CD8-positive, alpha-beta memory T cell (primary cell): ENCODE measurements at regions of chr16 and their contacts with region 1.

Region 1: GRCh38 chr16:67641779-67642708 is 2.9 kb upstream of the CARMIL2 start:
- DNase-seq: no peak
- H3K4me3 ChIP-seq: no peak overlapping the region
- H3K4me3 Mint-ChIP-seq: peak overlapping the region in 1 of 7 donors; percentile 36
- H3K27ac ChIP-seq: no peak overlapping the region
- H3K27ac Mint-ChIP-seq: peak overlapping the region in 2 of 8 donors; percentile 10 to 42
- H3K4me1 ChIP-seq: peaks cover 22% of the 10 kb centered on the region
- H3K4me1 Mint-ChIP-seq: peaks cover 4 to 24% (median 11%) of the 10 kb centered on the region in 3 donors
- H3K27me3 ChIP-seq: no peaks in the 10 kb centered on the region
- H3K27me3 Mint-ChIP-seq: no peaks in the 10 kb centered on the region

Region 2: GRCh38 chr16:67480833-67481560 is 161.0 kb before region 1 on chr16 and contains the start of gene ATP6V0D1:
- CTCF ChIA-PET with region 1: interaction called, 24 read pairs
- POLR2A ChIA-PET with region 1: interaction called, 3 read pairs
- DNase-seq: peak; percentile 98 to 99 (median 99)
- H3K4me3 ChIP-seq: peak within 1 kb of the TSS; percentile 96
- H3K4me3 Mint-ChIP-seq: peak within 1 kb of the TSS; percentile 96 to 100 (median 100)
- H3K27ac ChIP-seq: peak within 1 kb of the TSS; percentile 98
- H3K27ac Mint-ChIP-seq: peak within 1 kb of the TSS; percentile 96 to 100 (median 99)
- H3K4me1 ChIP-seq: peaks cover 28% of the 10 kb centered on the region
- H3K4me1 Mint-ChIP-seq: peaks cover 45 to 72% (median 47%) of the 10 kb centered on the region in 3 donors
- H3K27me3 ChIP-seq: no peaks in the 10 kb centered on the region
- H3K27me3 Mint-ChIP-seq: peaks cover 0 to 2% of the 10 kb centered on the region in 2 donors
- total RNA-seq, gene ATP6V0D1: 49.3 to 57.6 TPM

Region 3: DNA sequence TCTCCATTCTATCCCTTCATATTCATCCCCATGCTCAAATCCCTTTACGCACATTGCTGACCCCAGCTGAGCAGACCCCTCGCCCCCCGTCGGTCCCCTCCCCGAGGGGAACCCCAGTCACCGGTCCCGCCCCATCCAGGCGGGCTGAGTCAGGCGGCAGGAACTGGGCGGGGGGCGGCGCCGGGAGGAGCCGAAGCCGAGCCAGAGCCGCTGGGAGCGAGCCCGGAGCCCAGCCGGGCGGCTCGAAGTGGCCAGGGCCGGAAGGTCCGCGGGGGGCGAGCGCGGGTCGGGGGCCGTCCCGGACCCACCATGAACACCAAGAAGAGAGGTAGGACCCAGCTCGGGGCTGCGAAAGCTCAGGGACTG is 104.8 kb before region 1 on chr16:
- CTCF ChIA-PET with region 1: interaction called, 22 read pairs
- POLR2A ChIA-PET with region 1: interaction called, 6 read pairs
- DNase-seq: peak in 4 of 5 donors; percentile 37 to 71 (median 49)
- H3K4me3 ChIP-seq: peak overlapping the region; percentile 60
- H3K4me3 Mint-ChIP-seq: peak overlapping the region; percentile 85 to 93 (median 86)
- H3K27ac ChIP-seq: peak overlapping the region; percentile 47
- H3K27ac Mint-ChIP-seq: peak overlapping the region; percentile 74 to 92 (median 91)
- H3K4me1 ChIP-seq: peaks cover 24% of the 10 kb centered on the region
- H3K4me1 Mint-ChIP-seq: peaks cover 22 to 44% (median 27%) of the 10 kb centered on the region in 3 donors
- H3K27me3 ChIP-seq: no peaks in the 10 kb centered on the region
- H3K27me3 Mint-ChIP-seq: peaks cover 0 to 6% of the 10 kb centered on the region in 2 donors

Region 4: DNA sequence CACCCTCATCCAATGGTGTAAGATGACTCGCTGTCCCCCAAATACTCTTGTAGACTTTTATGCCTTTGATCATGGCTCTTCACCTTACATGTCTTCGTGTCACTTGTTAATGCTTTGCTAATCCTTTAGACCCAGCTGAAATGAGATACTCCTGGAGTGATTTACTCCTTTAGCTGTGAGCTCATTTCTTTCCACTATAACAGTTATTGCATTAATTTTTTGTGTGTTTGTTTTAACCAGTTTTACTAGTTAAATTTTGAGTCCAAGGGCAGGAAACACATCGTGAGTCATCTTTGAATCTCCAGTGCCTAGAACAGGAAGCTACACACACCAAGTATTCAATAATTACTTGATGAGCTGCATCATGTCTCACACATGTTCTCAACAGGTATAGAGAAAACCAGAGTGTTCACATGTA is 86.2 kb before region 1 on chr16:
- CTCF ChIA-PET with region 1: interaction called, 235 read pairs
- POLR2A ChIA-PET with region 1: interaction called, 39 read pairs
- DNase-seq: peak in 2 of 5 donors; percentile 30 to 50
- H3K4me3 ChIP-seq: no peak overlapping the region
- H3K4me3 Mint-ChIP-seq: peak overlapping the region; percentile 2 to 79 (median 46)
- H3K27ac ChIP-seq: no peak overlapping the region
- H3K27ac Mint-ChIP-seq: peak overlapping the region; percentile 48 to 93 (median 90)
- H3K4me1 ChIP-seq: peaks cover 46% of the 10 kb centered on the region
- H3K4me1 Mint-ChIP-seq: peaks cover 24 to 57% (median 48%) of the 10 kb centered on the region in 3 donors
- H3K27me3 ChIP-seq: no peaks in the 10 kb centered on the region
- H3K27me3 Mint-ChIP-seq: no peaks in the 10 kb centered on the region

Region 5: DNA sequence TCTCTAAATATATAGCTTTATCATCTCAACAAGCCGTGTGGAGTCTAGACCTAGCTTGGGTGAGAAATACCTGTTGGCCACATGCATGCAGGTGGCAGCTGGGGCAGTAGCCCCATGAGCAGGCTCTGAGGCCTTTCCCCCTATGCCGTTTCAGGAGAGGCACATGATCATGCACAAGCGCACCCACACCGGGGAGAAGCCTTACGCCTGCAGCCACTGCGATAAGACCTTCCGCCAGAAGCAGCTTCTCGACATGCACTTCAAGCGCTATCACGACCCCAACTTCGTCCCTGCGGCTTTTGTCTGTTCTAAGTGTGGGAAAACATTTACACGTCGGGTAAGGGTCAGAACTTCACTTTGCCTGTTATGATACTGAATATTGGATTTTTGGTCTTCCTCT is 13.8 kb before region 1 on chr16:
- CTCF ChIA-PET with region 1: interaction called, 10 read pairs
- POLR2A ChIA-PET with region 1: no interaction called
- DNase-seq: no peak
- H3K4me3 ChIP-seq: no peak overlapping the region
- H3K4me3 Mint-ChIP-seq: no peak overlapping the region
- H3K27ac ChIP-seq: no peak overlapping the region
- H3K27ac Mint-ChIP-seq: peak overlapping the region in 1 of 8 donors; percentile 44
- H3K4me1 ChIP-seq: no peaks in the 10 kb centered on the region
- H3K4me1 Mint-ChIP-seq: peaks cover 0 to 4% (median 0%) of the 10 kb centered on the region in 3 donors
- H3K27me3 ChIP-seq: no peaks in the 10 kb centered on the region
- H3K27me3 Mint-ChIP-seq: no peaks in the 10 kb centered on the region

Region 6: DNA sequence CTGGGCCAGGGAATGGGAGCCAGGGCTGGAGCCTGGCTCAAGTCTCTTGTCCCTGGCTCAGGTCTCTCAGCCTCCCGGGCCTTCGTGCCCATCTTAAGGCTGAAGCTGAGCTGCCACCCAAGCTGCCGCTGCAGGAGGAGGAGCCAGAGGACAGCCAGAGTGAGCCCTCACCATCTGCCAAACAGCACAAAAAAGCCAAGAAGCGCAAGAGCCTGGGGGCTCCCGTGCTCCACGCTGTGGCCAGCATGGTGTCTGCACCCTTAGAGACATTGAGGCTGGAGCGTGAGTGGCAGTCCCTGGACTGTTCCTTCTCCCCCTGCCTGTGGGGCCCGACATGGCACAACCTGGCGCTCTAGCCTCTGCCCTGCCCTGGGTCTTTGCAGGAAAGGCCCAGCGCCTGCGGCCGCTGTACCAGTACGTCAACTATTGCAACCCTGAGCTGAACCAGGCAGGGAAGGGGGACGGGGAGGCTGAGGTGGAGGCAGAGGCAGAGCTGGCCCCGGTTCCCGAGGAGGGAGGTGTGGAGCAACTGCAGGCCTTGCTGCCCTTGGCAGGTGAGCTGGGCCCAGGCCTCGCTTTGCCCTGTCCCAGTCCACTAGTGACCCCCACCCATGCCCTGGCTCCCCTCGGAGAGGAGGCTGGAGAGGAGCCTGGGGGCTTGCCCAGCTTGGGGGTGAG is 25.9 kb after region 1 on chr16:
- CTCF ChIA-PET with region 1: interaction called, 15 read pairs
- POLR2A ChIA-PET with region 1: interaction called, 3 read pairs
- DNase-seq: peak; percentile 48 to 86 (median 74)
- H3K4me3 ChIP-seq: no peak overlapping the region
- H3K4me3 Mint-ChIP-seq: peak overlapping the region; percentile 19 to 94 (median 71)
- H3K27ac ChIP-seq: no peak overlapping the region
- H3K27ac Mint-ChIP-seq: peak overlapping the region in 5 of 8 donors; percentile 6 to 80 (median 42)
- H3K4me1 ChIP-seq: peaks cover 17% of the 10 kb centered on the region
- H3K4me1 Mint-ChIP-seq: peaks cover 7 to 27% (median 12%) of the 10 kb centered on the region in 3 donors
- H3K27me3 ChIP-seq: no peaks in the 10 kb centered on the region
- H3K27me3 Mint-ChIP-seq: no peaks in the 10 kb centered on the region